ENCODE measurements at regions of chr19 and their contacts with region 1.

Region 1: DNA sequence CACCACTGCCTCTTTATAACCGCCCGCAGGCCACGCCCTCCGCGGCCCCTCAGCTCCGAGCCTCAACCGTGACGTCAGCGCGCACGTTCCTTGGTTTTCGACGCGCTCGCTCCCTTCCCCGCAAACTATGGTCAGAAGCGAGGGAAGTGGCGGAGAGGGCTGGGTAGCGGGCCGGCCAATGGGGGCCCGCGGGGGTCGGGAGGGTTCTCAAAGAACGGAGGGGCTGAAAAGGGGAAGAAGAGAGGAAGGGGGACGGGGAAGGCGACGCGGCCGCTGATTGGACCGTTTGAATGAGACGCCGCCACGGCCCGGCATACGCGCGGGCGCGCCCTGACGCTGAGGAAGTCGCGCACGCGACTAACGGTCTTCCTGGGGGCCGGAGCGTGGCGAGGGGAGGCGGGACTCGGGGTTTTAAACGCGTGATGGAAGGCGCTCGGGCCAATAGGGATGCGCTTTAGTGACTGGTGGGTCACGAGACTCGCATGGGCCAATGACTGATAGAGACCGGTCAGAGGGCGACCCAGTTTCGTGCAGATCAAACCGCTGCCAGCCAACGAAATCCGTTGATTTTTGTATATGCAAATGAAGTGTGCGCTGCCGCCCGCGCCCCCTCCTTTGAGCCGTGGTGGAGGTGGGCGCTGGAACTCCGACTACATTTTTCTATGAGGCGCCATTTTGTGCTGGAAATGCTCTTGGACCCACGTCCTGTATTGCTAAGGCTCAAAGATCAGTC is 378 bp upstream of the UBE2S start:
- DNase-seq: peak; percentile 98
- H3K4me3 Mint-ChIP-seq: peak overlapping the region; percentile 93
- H3K27ac Mint-ChIP-seq: peak overlapping the region; percentile 96
- H3K4me1 Mint-ChIP-seq: peaks cover 27% of the 10 kb centered on the region
- H3K27me3 Mint-ChIP-seq: no peaks in the 10 kb centered on the region

Region 2: DNA sequence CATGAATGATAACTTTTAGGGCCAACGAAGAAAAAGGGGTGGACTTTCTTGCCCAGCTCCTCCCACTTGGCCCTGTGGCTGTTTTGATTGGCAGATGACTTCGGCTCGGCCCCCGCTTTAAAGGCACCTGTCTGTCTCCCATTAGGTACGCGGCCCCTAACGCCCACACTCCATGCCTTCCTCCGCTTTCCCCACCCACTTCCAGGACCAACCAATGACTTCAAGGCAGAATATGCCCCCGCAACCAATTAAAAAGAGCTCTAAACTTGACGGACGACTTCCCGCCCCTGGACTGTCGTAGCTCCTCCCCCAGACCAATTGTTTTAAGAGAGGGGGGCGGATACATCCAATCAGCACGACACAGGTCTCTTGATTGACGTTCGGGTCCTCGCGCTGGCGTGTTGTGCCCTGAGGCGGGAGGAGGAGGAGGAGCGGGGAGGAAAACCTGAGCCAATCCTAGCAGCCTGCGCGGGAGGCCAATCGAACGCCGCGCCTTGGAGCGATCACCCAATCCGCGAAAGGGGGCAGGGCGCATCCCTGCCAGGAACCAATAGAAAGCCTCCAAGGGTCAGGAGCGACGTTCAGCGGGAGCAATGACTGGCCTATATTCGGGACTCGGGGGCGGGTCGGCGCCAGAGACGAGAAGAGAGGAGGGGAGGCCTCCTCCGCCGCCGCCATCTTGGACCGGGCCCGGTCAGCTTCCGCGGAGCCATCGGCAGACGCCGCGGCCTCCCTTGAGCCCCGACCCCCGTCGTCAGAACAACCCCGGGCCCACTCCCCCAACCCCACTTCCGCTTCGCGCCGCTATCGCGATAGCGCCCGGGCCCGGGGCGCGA is 1270.7 kb before region 1 on chr19 and contains the start of gene CNOT3:
- CTCF ChIA-PET with region 1: no interaction called
- intact Hi-C with region 1: loop called (anchors 5 kb)
- DNase-seq: peak; percentile 100
- H3K4me3 Mint-ChIP-seq: peak within 1 kb of the TSS; percentile 83
- H3K27ac Mint-ChIP-seq: peak within 1 kb of the TSS; percentile 89
- H3K4me1 Mint-ChIP-seq: peaks cover 39% of the 10 kb centered on the region
- H3K27me3 Mint-ChIP-seq: no peaks in the 10 kb centered on the region
- total RNA-seq, gene CNOT3: 50.4 to 58.3 TPM

Region 3: DNA sequence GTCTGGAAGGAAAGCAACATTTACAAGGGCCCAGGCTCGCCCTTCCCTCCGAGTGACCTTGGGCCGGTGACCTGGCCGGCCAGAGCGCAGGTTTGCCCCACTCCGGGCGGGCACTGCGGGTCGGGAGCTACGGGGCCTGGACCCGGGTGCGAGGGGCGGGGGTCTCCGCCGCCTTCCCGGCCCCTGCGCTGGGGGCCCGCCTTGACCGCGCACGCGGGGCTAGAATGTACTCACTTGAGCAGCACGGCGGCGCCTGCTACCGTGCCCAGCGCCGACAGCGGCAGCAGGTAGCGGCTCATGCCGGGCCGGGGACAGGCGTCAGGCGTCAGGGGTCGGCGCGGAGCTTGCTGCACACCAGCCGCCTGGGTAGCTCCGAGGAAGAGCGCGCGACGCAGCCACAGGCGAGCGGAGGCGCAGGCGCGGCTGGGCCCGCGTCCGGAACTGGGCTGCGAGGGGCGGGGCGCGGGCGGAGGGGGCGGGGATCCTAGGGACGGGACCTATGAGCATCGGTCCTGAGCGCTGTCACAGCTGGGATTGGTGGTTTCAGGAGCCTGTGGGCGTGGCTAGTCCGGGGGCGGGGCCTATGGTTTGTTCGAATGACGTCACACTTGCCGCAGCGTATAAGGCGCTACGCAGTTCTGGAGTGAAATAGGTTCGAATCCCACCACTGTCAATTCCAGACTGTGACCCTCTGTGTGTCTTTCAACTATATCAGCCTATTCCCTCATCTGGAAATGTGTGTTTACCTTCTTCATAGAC is 345.1 kb before region 1 on chr19 and contains the start of gene RDH13:
- CTCF ChIA-PET with region 1: no interaction called
- intact Hi-C with region 1: loop called (anchors 1 kb)
- DNase-seq: peak; percentile 99
- H3K4me3 Mint-ChIP-seq: peak within 1 kb of the TSS; percentile 84
- H3K27ac Mint-ChIP-seq: no peak within 1 kb of the TSS
- H3K4me1 Mint-ChIP-seq: peaks cover 18% of the 10 kb centered on the region
- H3K27me3 Mint-ChIP-seq: peaks cover 24% of the 10 kb centered on the region
- total RNA-seq, gene RDH13: 8.7 to 8.9 TPM

Region 4: GRCh38 chr19:55279770-55280643 is 128.0 kb before region 1 on chr19 and contains the start of gene HSPBP1:
- CTCF ChIA-PET with region 1: no interaction called
- intact Hi-C with region 1: loop called (anchors 5 kb)
- DNase-seq: peak; percentile 97
- H3K4me3 Mint-ChIP-seq: peak within 1 kb of the TSS; percentile 100
- H3K27ac Mint-ChIP-seq: peak within 1 kb of the TSS; percentile 93
- H3K4me1 Mint-ChIP-seq: peaks cover 28% of the 10 kb centered on the region
- H3K27me3 Mint-ChIP-seq: no peaks in the 10 kb centered on the region
- total RNA-seq, gene HSPBP1: 44.3 to 45.0 TPM

Region 5: DNA sequence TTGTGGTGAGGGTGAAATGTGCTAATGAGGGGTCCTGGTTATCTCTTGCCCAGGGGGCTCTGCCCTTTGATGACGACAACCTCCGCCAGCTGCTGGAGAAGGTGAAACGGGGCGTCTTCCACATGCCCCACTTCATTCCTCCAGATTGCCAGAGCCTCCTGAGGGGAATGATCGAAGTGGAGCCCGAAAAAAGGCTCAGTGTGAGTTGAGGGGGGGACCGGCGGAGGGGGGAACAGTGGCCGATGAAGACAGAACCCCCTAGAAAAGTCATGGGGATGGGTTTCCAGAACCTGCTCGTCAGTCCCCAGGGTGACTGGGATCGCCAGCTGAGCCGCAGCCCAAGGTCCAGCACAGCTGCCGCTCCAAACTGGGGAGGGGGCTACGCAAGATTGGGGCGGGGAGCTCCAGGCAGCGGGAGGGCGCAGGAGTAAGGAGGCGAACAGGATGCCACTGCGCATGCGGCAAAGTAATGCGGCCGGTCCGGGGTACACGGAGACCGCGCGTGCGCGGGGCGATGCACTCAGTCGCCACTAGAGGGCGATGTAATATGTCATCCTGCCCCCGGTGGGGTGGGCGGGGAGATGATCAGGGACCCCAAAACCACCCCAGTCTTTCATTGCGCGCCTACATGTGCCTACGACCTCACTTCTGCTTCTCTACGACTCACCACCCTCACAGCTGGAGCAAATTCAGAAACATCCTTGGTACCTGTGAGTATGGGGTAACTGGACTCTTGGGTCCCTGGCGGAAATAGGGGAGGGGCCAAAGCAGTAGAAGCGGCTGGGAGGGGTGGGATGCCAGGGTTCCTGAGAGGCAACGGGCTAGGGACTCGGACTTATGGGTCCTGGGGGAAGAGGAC is 106.3 kb before region 1 on chr19:
- CTCF ChIA-PET with region 1: interaction called, 3 read pairs
- intact Hi-C with region 1: loop called (anchors 5 kb)
- DNase-seq: peak; percentile 96
- H3K4me3 Mint-ChIP-seq: peak overlapping the region; percentile 78
- H3K27ac Mint-ChIP-seq: peak overlapping the region; percentile 86
- H3K4me1 Mint-ChIP-seq: peaks cover 7% of the 10 kb centered on the region
- H3K27me3 Mint-ChIP-seq: no peaks in the 10 kb centered on the region

Region 6: GRCh38 chr19:55461259-55461973 is 53.5 kb after region 1 on chr19 and contains the start of gene ISOC2:
- CTCF ChIA-PET with region 1: no interaction called
- intact Hi-C with region 1: loop called (anchors 1 kb)
- DNase-seq: peak; percentile 100
- H3K4me3 Mint-ChIP-seq: peak within 1 kb of the TSS; percentile 93
- H3K27ac Mint-ChIP-seq: peak within 1 kb of the TSS; percentile 77
- H3K4me1 Mint-ChIP-seq: peaks cover 20% of the 10 kb centered on the region
- H3K27me3 Mint-ChIP-seq: no peaks in the 10 kb centered on the region
- total RNA-seq, gene ISOC2: 18.6 to 20.5 TPM

Region 7: GRCh38 chr19:55476100-55476775 is 68.3 kb after region 1 on chr19 and contains the start of gene ZNF628:
- CTCF ChIA-PET with region 1: no interaction called
- intact Hi-C with region 1: loop called (anchors 1 kb)
- DNase-seq: peak; percentile 99
- H3K4me3 Mint-ChIP-seq: peak within 1 kb of the TSS; percentile 90
- H3K27ac Mint-ChIP-seq: peak within 1 kb of the TSS; percentile 90
- H3K4me1 Mint-ChIP-seq: peaks cover 30% of the 10 kb centered on the region
- H3K27me3 Mint-ChIP-seq: no peaks in the 10 kb centered on the region
- total RNA-seq, gene ZNF628: 6.0 to 6.1 TPM